Activated CD4-positive, alpha-beta T cell treated with anti-CD3 and anti-CD28 coated beads, Interleukin-2, amount 10 ng/mL, durations not matched to agents 24 days and 14 days (primary cell): ENCODE measurements at regions of chr17 and their contacts with region 1.

Region 1: GRCh38 chr17:10697092-10698081 is at the starts of genes ADPRM and SCO1:
- DNase-seq: peak; percentile 98
- H3K4me3 Mint-ChIP-seq: peak within 1 kb of the TSS; percentile 89
- H3K27ac Mint-ChIP-seq: peak within 1 kb of the TSS; percentile 93
- H3K4me1 Mint-ChIP-seq: peaks cover 46% of the 10 kb centered on the region
- H3K27me3 Mint-ChIP-seq: no peaks in the 10 kb centered on the region
- total RNA-seq, gene ADPRM: 10.0 and 11.9 TPM in 2 replicates
- total RNA-seq, gene SCO1: 43.4 and 44.9 TPM in 2 replicates

Region 2: DNA sequence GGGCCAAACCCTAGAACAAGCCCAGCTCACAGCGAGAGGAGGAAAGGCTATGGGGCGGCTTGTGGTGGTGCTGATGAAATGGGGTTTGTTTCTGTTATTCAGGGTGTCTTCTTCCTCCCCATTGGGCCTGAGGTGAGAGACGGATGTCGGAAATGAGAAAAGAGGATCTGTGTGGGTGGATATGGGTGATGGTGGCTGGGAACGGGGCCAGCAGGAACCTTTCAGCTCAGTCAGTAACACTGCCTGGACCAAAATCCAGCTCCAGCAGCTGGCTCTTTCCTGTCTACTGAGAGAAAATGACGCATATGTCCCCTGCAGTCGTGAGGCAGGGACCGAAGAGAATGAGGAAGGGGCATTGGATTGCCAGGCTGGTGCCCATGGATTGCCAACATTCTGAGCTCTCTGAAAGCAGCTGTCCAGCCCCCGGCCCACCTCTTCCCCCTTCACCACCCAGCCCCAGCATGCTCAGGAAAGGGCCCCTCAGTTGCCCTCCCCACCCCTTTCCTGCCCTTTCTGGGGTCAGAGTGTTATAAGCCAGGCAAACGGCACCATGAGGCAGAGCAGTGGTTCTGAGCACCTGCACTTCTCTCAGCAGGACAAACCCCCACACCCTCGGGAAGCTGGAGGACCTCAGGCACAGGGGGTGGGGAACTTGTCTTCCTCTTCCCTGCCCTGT is 44.3 kb before region 1 on chr17:
- intact Hi-C with region 1: loop called (anchors 2 kb)
- DNase-seq: peak; percentile 60
- H3K4me3 Mint-ChIP-seq: peak overlapping the region; percentile 2
- H3K27ac Mint-ChIP-seq: peak overlapping the region; percentile 45
- H3K4me1 Mint-ChIP-seq: peaks cover 9% of the 10 kb centered on the region
- H3K27me3 Mint-ChIP-seq: no peaks in the 10 kb centered on the region

Region 3: GRCh38 chr17:10713318-10713717 is 15.9 kb after region 1 on chr17:
- intact Hi-C with region 1: no loop called
- DNase-seq: no peak
- H3K4me3 Mint-ChIP-seq: no peak overlapping the region
- H3K27ac Mint-ChIP-seq: no peak overlapping the region
- H3K4me1 Mint-ChIP-seq: no peaks in the 10 kb centered on the region
- H3K27me3 Mint-ChIP-seq: no peaks in the 10 kb centered on the region

Region 4: DNA sequence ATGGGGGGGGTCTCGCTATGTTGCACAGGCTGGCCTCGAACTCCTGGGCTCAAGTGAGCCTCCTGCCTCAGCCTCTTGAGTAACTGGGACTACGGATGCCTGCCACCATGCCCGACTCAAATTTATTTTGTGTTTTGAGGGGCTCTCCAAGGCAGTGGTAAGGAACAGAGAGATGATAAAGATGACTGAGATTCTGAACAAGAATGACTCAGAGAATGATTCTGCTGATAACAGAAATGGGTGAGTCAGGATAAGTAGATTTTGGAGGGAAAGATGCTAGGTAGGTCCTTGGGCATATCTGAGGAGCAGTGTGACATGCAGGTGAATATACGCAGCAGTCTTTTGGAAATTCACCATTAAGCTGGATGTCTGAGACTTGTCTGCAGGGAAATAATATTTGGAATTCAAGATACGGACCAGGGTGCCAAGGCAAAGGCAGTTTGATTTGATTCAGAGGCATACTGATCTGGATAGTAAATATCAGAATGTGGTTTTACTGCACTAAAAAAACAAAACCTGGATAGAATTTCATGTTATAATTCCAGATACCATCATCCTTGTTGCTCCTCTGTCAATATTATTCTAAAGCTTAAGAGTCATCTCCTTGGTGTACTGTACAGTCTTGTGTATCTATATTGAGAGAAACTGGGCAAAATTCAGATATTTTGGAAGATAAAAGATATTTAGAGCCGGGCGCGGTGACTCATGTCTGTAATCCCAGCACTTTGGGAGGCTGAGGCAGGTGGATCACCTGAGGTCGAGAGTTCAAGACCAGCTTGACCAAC is 30.0 kb after region 1 on chr17:
- intact Hi-C with region 1: loop called (anchors 2 kb)
- DNase-seq: no peak
- H3K4me3 Mint-ChIP-seq: no peak overlapping the region
- H3K27ac Mint-ChIP-seq: no peak overlapping the region
- H3K4me1 Mint-ChIP-seq: peaks cover 14% of the 10 kb centered on the region
- H3K27me3 Mint-ChIP-seq: peaks cover 4% of the 10 kb centered on the region